ENCODE measurements at regions of chr1 and their contacts with region 1.

Region 1: DNA sequence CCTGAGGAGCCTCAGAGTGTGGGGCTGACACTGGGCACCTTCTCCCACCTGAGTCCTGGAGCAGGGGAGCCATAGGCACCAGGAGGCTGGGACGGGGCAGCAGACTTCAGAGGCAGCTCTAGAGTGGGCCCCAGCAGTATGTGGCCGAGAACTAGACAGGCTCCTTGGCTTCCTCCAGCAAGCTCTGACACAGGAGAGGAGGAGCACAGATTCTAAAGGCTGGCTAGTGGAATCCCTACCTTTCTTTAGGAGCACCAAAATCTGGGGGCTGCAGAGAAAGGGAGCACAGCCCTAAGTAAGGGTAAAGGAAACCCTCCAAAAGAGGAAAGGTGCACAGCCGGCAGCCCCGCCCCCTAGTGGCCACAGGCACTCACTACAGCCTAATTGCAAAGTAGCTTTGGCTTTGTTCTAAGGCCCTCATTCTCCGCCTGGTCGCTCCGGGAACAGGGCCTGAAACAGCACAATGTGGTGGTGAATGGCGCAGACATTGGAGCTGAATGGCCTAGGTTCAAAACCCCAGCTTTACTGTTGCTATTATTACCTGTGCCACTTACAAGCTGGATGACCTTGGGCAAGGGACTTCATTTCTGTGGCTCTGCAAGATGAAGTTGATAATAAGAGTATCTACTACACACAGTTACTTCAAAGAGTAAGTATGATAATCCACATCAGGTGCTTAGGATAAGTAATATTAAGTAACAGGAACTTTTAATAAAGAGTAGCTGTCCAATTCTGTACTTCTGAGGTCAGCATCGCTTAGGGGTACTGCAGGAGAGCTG is 8.8 kb upstream of the GUCA2A start:
- DNase-seq: no peak
- ATAC-seq: peak; percentile 86
- H3K4me3 ChIP-seq: no peak overlapping the region
- H3K27ac ChIP-seq: no peak overlapping the region
- H3K4me1 ChIP-seq: no peaks in the 10 kb centered on the region
- H3K27me3 ChIP-seq: no peaks in the 10 kb centered on the region
- CTCF ChIP-seq: peak; percentile 92 to 98 (median 96)
- EP300 ChIP-seq: no peak
- POLR2A ChIP-seq: no peak
- RAD21 ChIP-seq: peak; percentile 73

Region 2: DNA sequence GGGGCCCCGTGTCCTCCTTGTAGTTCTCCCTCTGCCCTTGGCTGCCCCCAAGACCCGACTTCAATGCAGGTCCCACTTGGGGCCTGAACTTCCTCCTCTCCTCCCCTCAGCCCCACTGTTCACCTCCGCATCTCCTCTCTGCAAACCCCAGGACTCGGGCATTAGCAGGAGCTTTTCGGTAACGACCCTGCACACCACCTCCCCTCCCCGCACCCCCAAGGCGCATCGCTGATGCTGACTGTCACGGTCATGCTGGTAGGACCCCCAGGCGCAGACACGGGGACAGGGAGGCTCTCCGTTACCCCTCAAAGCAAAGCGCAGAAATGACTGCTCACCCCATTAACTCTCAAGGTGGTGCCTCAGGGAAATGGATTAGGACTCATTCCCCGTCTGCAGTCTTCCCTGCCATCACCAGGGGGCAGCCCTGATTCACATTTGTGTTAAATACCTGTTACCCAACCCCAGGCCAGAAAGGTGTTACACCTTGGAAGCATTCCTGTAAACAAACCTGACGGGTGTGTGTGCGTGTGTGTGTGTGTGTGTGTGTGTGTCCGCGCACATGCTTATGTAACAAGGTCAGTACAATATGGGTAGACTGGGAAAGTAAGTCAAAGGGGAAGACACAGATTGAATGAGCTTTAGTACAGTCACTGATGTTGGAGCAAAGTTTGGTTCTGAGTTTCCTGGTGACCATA is 26.6 kb before region 1 on chr1:
- CTCF ChIA-PET with region 1: interaction called, 17 read pairs
- POLR2A ChIA-PET with region 1: no interaction called
- RAD21 ChIA-PET with region 1: interaction called, 8 read pairs
- SMC1A ChIA-PET with region 1: interaction called, 9 read pairs
- in situ Hi-C with region 1: no loop called
- intact Hi-C with region 1: loop called (anchors 2 kb)
- DNase-seq: no peak
- ATAC-seq: peak; percentile 93
- H3K4me3 ChIP-seq: no peak overlapping the region
- H3K27ac ChIP-seq: no peak overlapping the region
- H3K4me1 ChIP-seq: no peaks in the 10 kb centered on the region
- H3K27me3 ChIP-seq: no peaks in the 10 kb centered on the region
- CTCF ChIP-seq: peak; percentile 84 to 87 (median 85)
- EP300 ChIP-seq: no peak
- POLR2A ChIP-seq: no peak
- RAD21 ChIP-seq: peak; percentile 89

Region 3: DNA sequence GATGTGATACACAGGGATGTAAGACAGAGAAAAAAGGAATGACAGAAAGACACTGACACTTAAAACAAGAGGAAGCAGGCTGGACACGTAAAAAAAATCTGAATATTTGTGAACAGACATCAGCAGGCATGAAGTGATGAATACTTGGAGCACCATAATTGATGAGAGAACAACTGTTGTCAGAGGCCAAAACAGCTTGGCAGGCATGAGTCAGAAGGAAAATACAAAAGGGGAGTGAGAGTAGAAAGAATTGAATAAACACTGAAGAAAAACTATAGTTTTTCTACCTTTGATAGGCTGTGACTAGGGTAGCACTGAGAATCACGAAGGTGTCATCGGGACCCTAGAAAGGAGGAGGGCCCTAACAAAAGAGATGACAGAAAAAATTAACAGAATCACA is 12.8 kb after region 1 on chr1:
- CTCF ChIA-PET with region 1: interaction called, 32 read pairs
- POLR2A ChIA-PET with region 1: no interaction called
- RAD21 ChIA-PET with region 1: interaction called, 4 read pairs
- SMC1A ChIA-PET with region 1: interaction called, 6 read pairs
- in situ Hi-C with region 1: no loop called
- intact Hi-C with region 1: no loop called
- DNase-seq: no peak
- ATAC-seq: no peak
- H3K4me3 ChIP-seq: no peak overlapping the region
- H3K27ac ChIP-seq: no peak overlapping the region
- H3K4me1 ChIP-seq: no peaks in the 10 kb centered on the region
- H3K27me3 ChIP-seq: no peaks in the 10 kb centered on the region
- CTCF ChIP-seq: no peak
- EP300 ChIP-seq: no peak
- POLR2A ChIP-seq: no peak
- RAD21 ChIP-seq: no peak

Region 4: GRCh38 chr1:42335050-42335808 is 161.9 kb after region 1 on chr1 and contains the start of gene FOXJ3:
- CTCF ChIA-PET with region 1: interaction called, 21 read pairs
- POLR2A ChIA-PET with region 1: no interaction called
- RAD21 ChIA-PET with region 1: interaction called, 8 read pairs
- SMC1A ChIA-PET with region 1: interaction called, 10 read pairs
- in situ Hi-C with region 1: no loop called
- intact Hi-C with region 1: loop called (anchors 5 kb)
- DNase-seq: peak; percentile 71
- ATAC-seq: peak; percentile 90
- H3K4me3 ChIP-seq: peak within 1 kb of the TSS; percentile 92
- H3K27ac ChIP-seq: peak within 1 kb of the TSS; percentile 85
- H3K4me1 ChIP-seq: no peaks in the 10 kb centered on the region
- H3K27me3 ChIP-seq: no peaks in the 10 kb centered on the region
- CTCF ChIP-seq: no peak
- EP300 ChIP-seq: 0 out of 4 replicates have a peak, but pooled peaks of 1 of the 2 experiments have one; percentile 5
- POLR2A ChIP-seq: peak; percentile 95
- RAD21 ChIP-seq: no peak
- polyA plus RNA-seq, gene FOXJ3: 9.5 to 11.9 TPM